ENCODE measurements at regions of chr18 and their contacts with region 1.

Region 1: GRCh38 chr18:46555724-46556123 is 101.3 kb downstream of the LOXHD1 start:
- DNase-seq: peak; percentile 30 to 60 (median 50)
- H3K4me3 ChIP-seq: no peak overlapping the region
- H3K27ac ChIP-seq: no peak overlapping the region
- H3K4me1 ChIP-seq: no peaks in the 10 kb centered on the region
- H3K27me3 ChIP-seq: no peaks in the 10 kb centered on the region

Region 2: GRCh38 chr18:46622999-46623398 is 67.3 kb after region 1 on chr18:
- CTCF ChIA-PET with region 1: interaction called, 31 read pairs
- POLR2A ChIA-PET with region 1: no interaction called
- DNase-seq: peak; percentile 25 to 41 (median 40)
- H3K4me3 ChIP-seq: no peak overlapping the region
- H3K27ac ChIP-seq: no peak overlapping the region
- H3K4me1 ChIP-seq: peaks cover 5 to 42% (median 21%) of the 10 kb centered on the region in 4 experiments
- H3K27me3 ChIP-seq: no peaks in the 10 kb centered on the region

Measured in common myeloid progenitor, CD34-positive (primary cell).